Naive thymus-derived CD4-positive, alpha-beta T cell (primary cell): ENCODE measurements at regions of chr14 and their contacts with region 1.

Region 1: DNA sequence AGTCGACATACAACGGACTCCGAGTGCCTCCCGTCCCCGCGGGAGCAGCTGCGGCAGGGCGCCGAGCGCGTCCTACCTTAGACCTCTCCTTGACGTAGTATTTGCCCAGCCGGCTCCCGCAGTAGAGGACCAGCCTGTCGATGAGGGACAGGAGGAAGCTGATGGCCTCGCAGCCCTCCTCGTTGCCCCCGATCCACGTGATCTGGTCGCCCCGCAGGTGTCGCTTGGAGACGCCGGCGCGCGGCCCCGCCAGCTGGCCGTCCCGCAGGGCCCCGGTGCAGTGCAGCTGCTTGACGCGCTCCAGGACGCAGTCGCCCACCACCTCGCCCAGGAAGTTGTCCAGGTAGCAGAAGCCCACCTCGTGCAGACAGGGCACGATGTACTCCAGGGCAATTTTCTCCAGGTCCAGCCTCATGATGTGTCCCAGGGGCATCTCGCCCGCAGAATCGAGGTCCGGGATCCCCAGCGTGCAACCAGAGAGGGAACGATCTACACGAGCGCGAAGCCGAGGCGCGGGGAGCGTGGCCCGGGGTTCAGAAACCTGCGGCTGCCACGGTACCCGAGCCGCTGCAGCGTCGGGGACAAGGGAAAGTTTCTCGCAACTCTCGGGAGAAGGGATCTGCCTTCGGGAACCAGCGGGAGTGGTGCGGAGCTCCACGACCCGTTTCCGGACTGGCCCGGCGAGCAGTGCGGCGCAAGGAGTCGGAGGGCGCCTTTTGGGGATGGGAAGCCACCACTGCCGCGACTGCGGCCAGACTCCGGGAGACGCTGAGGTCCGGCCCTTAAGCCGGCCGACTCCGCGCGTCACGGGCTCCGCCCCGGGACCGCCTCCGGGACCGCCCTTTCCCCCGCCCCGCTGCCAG is at the start of gene EGLN3:
- DNase-seq: peak in 2 of 9 donors; percentile 20 to 87
- ATAC-seq: peak; percentile 78
- H3K4me3 ChIP-seq: peak within 1 kb of the TSS; percentile 37
- H3K4me3 Mint-ChIP-seq: peak within 1 kb of the TSS; percentile 59 to 92 (median 73)
- H3K27ac ChIP-seq: no peak within 1 kb of the TSS
- H3K27ac Mint-ChIP-seq: peak within 1 kb of the TSS in 1 of 9 donors; percentile 84
- H3K4me1 ChIP-seq: peaks cover 4% of the 10 kb centered on the region in 2 donors
- H3K4me1 Mint-ChIP-seq: peaks cover 13 to 44% (median 24%) of the 10 kb centered on the region in 7 donors
- H3K27me3 ChIP-seq: peaks cover 0 to 4% of the 10 kb centered on the region in 2 donors
- H3K27me3 Mint-ChIP-seq: peaks cover 41 to 77% (median 51%) of the 10 kb centered on the region in 5 donors
- total RNA-seq, gene EGLN3: 0.97 to 96.5 (median 1.3) TPM

Region 2: DNA sequence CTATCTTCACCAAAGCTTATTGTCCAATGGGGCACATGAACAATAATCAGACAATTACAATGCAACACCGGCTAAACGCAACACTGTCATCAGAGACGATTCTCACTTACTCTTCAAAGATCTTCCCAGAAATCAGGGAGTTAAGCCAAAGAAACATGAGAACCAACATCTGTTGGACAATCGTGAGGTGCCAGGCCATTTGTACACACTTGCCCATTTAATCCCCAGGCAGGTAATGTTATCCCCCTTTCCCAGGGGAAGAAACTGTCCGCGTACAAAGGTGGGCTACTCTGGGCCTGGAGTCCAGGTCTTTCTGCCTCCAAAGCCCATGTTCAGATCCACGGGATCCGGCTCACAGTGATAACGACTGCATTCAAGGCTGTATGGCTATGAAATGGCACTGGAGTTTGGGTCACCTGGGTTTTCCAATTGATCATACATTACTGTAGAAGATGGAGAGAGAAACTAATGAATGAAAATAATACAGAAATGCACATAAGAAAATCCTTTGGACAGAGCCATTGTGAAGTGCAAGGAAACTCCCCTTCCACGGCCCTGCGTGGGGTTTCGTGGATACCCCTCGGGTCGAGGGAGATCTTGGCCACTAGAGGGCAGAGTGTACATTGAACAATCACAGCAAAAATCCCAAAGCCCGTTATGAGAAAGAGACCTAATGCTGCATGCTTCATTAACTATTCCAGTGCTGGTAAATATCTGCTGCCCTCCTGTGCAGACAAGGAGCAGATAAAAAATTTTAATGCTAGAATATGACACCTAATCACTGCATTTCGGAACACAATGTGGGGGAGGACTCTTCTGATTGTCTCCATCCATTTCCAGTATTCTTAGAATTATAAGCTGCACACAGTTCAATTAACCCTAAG is 111.1 kb before region 1 on chr14:
- CTCF ChIA-PET with region 1: no interaction called
- POLR2A ChIA-PET with region 1: no interaction called
- intact Hi-C with region 1: loop called in 1 of 2 experiments (anchors 2 kb)
- DNase-seq: peak in 8 of 9 donors; percentile 2 to 56 (median 30)
- ATAC-seq: peak; percentile 79
- H3K4me3 ChIP-seq: no peak overlapping the region
- H3K4me3 Mint-ChIP-seq: no peak overlapping the region
- H3K27ac ChIP-seq: no peak overlapping the region
- H3K27ac Mint-ChIP-seq: no peak overlapping the region
- H3K4me1 ChIP-seq: no peaks in the 10 kb centered on the region
- H3K4me1 Mint-ChIP-seq: peaks cover 0 to 48% (median 0%) of the 10 kb centered on the region in 7 donors
- H3K27me3 ChIP-seq: no peaks in the 10 kb centered on the region
- H3K27me3 Mint-ChIP-seq: peaks cover 0 to 8% (median 0%) of the 10 kb centered on the region in 5 donors

Region 3: DNA sequence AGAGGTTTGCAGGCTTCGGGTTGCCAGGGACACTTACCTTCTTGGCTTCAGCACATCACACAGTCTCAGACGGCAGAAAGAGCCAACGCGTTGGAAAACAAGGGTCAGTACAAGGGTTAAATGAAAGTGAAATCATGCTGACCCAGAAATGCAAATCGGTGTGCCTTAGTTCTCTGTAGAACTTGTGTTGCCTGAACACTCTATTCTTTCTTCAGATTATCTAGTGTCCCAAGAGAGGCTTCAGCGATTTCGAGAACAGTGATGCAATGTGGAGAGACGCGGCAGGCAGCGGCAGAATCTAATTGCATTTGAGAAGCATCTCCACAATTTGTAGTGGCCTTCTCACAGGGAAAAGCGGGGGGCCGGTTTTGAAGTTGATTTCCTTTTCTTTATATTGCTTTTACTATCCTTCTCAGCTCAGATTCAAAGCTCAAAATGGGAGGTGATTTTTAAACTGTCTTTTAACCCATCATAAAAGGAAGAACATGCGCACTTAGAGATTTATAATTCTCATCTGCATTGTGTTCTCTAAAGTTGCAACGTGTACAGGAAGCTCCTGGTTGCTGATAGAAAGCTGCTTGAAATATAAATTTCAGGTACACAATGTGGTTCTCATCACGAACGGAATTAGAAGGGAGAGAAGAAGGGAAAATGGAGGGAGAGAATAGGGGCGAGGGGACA is 68.2 kb after region 1 on chr14:
- CTCF ChIA-PET with region 1: no interaction called
- POLR2A ChIA-PET with region 1: no interaction called
- intact Hi-C with region 1: loop called in 1 of 2 experiments (anchors 1 kb)
- DNase-seq: peak in 5 of 9 donors; percentile 10 to 46 (median 19)
- ATAC-seq: peak; percentile 78
- H3K4me3 ChIP-seq: peak overlapping the region; percentile 45
- H3K4me3 Mint-ChIP-seq: peak overlapping the region; percentile 69 to 94 (median 84)
- H3K27ac ChIP-seq: peak overlapping the region; percentile 47
- H3K27ac Mint-ChIP-seq: peak overlapping the region; percentile 2 to 98 (median 95)
- H3K4me1 ChIP-seq: no peaks in the 10 kb centered on the region
- H3K4me1 Mint-ChIP-seq: peaks cover 6 to 40% (median 17%) of the 10 kb centered on the region in 7 donors
- H3K27me3 ChIP-seq: no peaks in the 10 kb centered on the region
- H3K27me3 Mint-ChIP-seq: peaks cover 0 to 8% (median 0%) of the 10 kb centered on the region in 5 donors

Region 4: GRCh38 chr14:34043627-34044372 is 93.2 kb after region 1 on chr14:
- CTCF ChIA-PET with region 1: no interaction called
- POLR2A ChIA-PET with region 1: no interaction called
- intact Hi-C with region 1: loop called in 1 of 2 experiments (anchors 2 kb)
- DNase-seq: peak in 1 of 9 donors; percentile 88
- ATAC-seq: peak; percentile 81
- H3K4me3 ChIP-seq: peak overlapping the region; percentile 35
- H3K4me3 Mint-ChIP-seq: peak overlapping the region in 6 of 10 donors; percentile 1 to 78 (median 20)
- H3K27ac ChIP-seq: no peak overlapping the region
- H3K27ac Mint-ChIP-seq: peak overlapping the region in 4 of 9 donors; percentile 46 to 93 (median 54)
- H3K4me1 ChIP-seq: peaks cover 6 to 7% of the 10 kb centered on the region in 2 donors
- H3K4me1 Mint-ChIP-seq: peaks cover 6 to 74% (median 36%) of the 10 kb centered on the region in 7 donors
- H3K27me3 ChIP-seq: no peaks in the 10 kb centered on the region
- H3K27me3 Mint-ChIP-seq: peaks cover 0 to 6% (median 0%) of the 10 kb centered on the region in 5 donors

Region 5: GRCh38 chr14:34059855-34060638 is 109.5 kb after region 1 on chr14:
- CTCF ChIA-PET with region 1: no interaction called
- POLR2A ChIA-PET with region 1: no interaction called
- intact Hi-C with region 1: loop called in 1 of 2 experiments (anchors 1 kb)
- DNase-seq: peak in 4 of 9 donors; percentile 5 to 77 (median 22)
- ATAC-seq: peak; percentile 95
- H3K4me3 ChIP-seq: peak overlapping the region; percentile 37
- H3K4me3 Mint-ChIP-seq: peak overlapping the region; percentile 77 to 90 (median 82)
- H3K27ac ChIP-seq: no peak overlapping the region
- H3K27ac Mint-ChIP-seq: peak overlapping the region in 1 of 9 donors; percentile 92
- H3K4me1 ChIP-seq: no peaks in the 10 kb centered on the region
- H3K4me1 Mint-ChIP-seq: peaks cover 0 to 52% (median 7%) of the 10 kb centered on the region in 7 donors
- H3K27me3 ChIP-seq: no peaks in the 10 kb centered on the region
- H3K27me3 Mint-ChIP-seq: peaks cover 9 to 15% (median 13%) of the 10 kb centered on the region in 5 donors

Region 6: GRCh38 chr14:34098045-34098984 is 147.8 kb after region 1 on chr14:
- CTCF ChIA-PET with region 1: no interaction called
- POLR2A ChIA-PET with region 1: no interaction called
- intact Hi-C with region 1: loop called in 1 of 2 experiments (anchors 2 kb)
- DNase-seq: peak in 2 of 9 donors; percentile 2 to 29
- ATAC-seq: no peak
- H3K4me3 ChIP-seq: no peak overlapping the region
- H3K4me3 Mint-ChIP-seq: peak overlapping the region in 1 of 10 donors; percentile 39
- H3K27ac ChIP-seq: no peak overlapping the region
- H3K27ac Mint-ChIP-seq: peak overlapping the region in 1 of 9 donors; percentile 40
- H3K4me1 ChIP-seq: no peaks in the 10 kb centered on the region
- H3K4me1 Mint-ChIP-seq: peaks cover 0 to 53% (median 7%) of the 10 kb centered on the region in 7 donors
- H3K27me3 ChIP-seq: no peaks in the 10 kb centered on the region
- H3K27me3 Mint-ChIP-seq: peaks cover 0 to 4% (median 0%) of the 10 kb centered on the region in 5 donors

Region 7: DNA sequence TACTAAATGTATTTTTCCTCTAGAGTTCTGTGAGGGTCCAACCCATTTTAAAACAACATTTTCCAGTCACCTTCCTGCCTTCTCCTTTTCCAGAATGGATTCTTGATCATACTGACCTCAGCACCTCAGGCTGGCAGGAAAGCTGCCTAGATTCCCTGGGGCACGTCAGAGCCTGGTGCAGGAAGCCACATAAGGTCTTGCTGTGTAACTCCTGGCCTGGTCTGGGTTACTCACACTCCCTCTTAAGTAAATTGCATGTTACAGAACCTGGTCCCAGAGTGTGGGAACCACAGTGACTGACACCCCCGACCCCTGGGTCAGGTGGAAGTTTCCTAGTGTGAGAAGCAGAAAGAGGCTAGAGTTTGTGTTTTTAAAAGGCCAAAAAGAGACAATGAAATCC is 301.7 kb after region 1 on chr14:
- CTCF ChIA-PET with region 1: no interaction called
- POLR2A ChIA-PET with region 1: no interaction called
- intact Hi-C with region 1: no loop called
- DNase-seq: no peak
- ATAC-seq: no peak
- H3K4me3 ChIP-seq: no peak overlapping the region
- H3K4me3 Mint-ChIP-seq: no peak overlapping the region
- H3K27ac ChIP-seq: no peak overlapping the region
- H3K27ac Mint-ChIP-seq: no peak overlapping the region
- H3K4me1 ChIP-seq: no peaks in the 10 kb centered on the region
- H3K4me1 Mint-ChIP-seq: no peaks in the 10 kb centered on the region
- H3K27me3 ChIP-seq: no peaks in the 10 kb centered on the region
- H3K27me3 Mint-ChIP-seq: peaks cover 1 to 22% (median 5%) of the 10 kb centered on the region in 5 donors

Region 8: DNA sequence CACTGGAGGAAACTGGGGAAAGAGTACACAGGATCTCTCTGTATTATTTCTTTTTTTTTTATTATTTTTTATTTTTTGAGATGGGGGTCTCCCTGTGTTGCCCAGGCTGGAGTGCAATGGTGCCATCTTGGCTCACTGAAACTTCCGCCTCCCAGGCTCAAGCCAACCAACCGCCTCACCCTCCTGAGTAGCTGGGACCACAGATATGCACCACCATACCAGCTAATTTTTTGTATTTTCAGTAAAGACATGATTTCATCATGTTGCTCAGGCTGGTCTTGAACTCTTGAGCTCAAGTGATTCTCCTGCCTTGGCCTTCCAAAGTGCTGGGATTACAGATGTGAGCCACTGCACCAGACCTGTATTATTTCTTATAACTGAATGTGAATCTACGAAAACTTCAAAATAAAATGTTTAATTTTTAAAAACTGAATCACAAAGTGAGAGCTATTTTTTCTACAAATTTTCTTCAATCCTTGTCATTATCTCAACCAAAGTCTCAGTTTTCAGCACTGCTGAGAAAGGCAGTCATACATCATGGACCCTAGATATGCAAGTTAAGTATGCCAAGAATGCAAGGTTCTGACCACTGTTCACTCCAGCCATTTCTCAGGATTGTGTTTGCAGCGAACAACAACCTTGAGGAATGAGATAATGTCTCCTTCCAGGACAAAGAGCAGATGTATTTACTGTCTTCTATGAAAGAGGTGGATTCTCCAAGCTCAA is 586.6 kb after region 1 on chr14:
- CTCF ChIA-PET with region 1: no interaction called
- POLR2A ChIA-PET with region 1: no interaction called
- intact Hi-C with region 1: no loop called
- DNase-seq: no peak
- ATAC-seq: no peak
- H3K4me3 ChIP-seq: no peak overlapping the region
- H3K4me3 Mint-ChIP-seq: peak overlapping the region; percentile 12 to 99 (median 54)
- H3K27ac ChIP-seq: peak overlapping the region; percentile 97
- H3K27ac Mint-ChIP-seq: peak overlapping the region in 4 of 9 donors; percentile 21 to 100 (median 88)
- H3K4me1 ChIP-seq: peaks cover 18 to 24% of the 10 kb centered on the region in 2 donors
- H3K4me1 Mint-ChIP-seq: peaks cover 5 to 54% (median 40%) of the 10 kb centered on the region in 7 donors
- H3K27me3 ChIP-seq: no peaks in the 10 kb centered on the region
- H3K27me3 Mint-ChIP-seq: no peaks in the 10 kb centered on the region